ENCODE measurements at regions of chr17 and their contacts with region 1.

Region 1: DNA sequence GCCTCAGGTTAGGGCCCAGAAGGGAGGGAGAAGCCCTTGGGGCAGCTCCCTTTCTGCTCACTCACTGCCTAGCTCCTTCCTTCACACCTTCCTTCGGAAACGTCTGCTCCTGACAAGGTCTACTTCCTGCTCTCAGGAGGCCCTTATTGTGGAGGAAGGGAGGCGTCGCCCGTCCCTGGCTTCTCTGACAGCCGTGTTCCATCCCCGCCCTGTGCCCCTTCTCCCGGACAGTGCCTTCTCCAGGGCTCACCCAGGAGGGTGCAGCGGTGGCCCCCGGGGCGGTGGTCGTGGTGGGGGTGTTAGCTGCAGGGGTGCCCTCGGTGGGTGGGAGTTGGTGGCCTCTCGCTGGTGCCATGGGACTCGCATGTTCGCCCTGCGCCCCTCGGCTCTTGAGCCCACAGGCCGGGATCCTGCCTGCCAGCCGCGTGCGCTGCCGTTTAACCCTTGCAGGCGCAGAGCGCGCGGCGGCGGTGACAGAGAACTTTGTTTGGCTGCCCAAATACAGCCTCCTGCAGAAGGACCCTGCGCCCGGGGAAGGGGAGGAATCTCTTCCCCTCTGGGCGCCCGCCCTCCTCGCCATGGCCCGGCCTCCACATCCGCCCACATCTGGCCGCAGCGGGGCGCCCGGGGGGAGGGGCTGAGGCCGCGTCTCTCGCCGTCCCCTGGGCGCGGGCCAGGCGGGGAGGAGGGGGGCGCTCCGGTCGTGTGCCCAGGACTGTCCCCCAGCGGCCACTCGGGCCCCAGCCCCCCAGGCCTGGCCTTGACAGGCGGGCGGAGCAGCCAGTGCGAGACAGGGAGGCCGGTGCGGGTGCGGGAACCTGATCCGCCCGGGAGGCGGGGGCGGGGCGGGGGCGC is 231.9 kb downstream of the SEC14L1 start:
- DNase-seq: peak; percentile 44 to 82 (median 63)
- ATAC-seq: peak; percentile 60
- H3K4me3 ChIP-seq: peak overlapping the region; percentile 98
- H3K4me3 Mint-ChIP-seq: peak overlapping the region; percentile 80 to 100 (median 85)
- H3K27ac ChIP-seq: peak overlapping the region; percentile 80
- H3K27ac Mint-ChIP-seq: peak overlapping the region in 8 of 9 donors; percentile 84 to 93 (median 90)
- H3K4me1 ChIP-seq: peaks cover 44 to 54% of the 10 kb centered on the region in 2 donors
- H3K4me1 Mint-ChIP-seq: peaks cover 49 to 74% (median 65%) of the 10 kb centered on the region in 7 donors
- H3K27me3 ChIP-seq: no peaks in the 10 kb centered on the region
- H3K27me3 Mint-ChIP-seq: no peaks in the 10 kb centered on the region

Region 2: DNA sequence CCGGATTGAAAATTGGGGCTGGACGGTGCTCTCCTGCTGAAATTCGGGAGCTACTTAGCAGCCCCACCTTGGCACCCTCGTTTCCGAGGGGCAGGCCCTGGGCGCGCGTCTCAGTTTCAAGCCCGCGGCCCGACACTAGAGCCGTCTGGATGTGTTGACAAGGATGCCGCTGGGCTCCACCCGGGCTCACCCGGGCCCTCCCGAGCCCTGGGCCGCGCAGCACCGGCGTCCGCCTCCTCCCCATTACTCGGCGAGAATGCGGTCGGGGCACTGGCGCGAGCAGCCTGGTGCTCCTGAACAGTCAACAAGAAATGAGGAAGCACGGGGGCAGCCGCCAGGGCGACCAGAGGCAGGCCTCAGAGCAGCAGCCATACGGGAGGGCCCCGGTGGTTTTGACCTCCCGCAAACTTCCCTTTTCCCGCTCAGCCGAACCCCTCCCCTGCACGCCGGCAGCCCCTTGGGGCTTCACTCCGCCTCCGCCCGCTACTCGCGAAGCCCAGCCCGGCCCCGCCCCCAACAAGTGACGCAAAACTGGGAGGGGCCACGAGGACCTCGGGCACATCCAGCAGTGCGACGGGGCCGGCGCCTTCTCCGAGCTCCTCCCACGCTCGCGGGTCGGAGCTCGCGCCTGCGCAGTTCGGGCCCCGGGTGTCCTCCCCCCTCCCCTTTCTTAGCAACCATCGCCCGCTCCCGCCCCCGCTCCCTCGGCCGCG is 232.3 kb before region 1 on chr17:
- CTCF ChIA-PET with region 1: no interaction called
- POLR2A ChIA-PET with region 1: no interaction called
- intact Hi-C with region 1: loop called in 1 of 2 experiments (anchors 2 kb)
- DNase-seq: peak; percentile 98 to 100 (median 99)
- ATAC-seq: peak; percentile 96
- H3K4me3 ChIP-seq: peak overlapping the region; percentile 74
- H3K4me3 Mint-ChIP-seq: peak overlapping the region; percentile 65 to 87 (median 80)
- H3K27ac ChIP-seq: peak overlapping the region; percentile 88
- H3K27ac Mint-ChIP-seq: peak overlapping the region; percentile 75 to 93 (median 90)
- H3K4me1 ChIP-seq: peaks cover 14 to 28% of the 10 kb centered on the region in 2 donors
- H3K4me1 Mint-ChIP-seq: peaks cover 32 to 73% (median 66%) of the 10 kb centered on the region in 7 donors
- H3K27me3 ChIP-seq: no peaks in the 10 kb centered on the region
- H3K27me3 Mint-ChIP-seq: no peaks in the 10 kb centered on the region

Region 3: DNA sequence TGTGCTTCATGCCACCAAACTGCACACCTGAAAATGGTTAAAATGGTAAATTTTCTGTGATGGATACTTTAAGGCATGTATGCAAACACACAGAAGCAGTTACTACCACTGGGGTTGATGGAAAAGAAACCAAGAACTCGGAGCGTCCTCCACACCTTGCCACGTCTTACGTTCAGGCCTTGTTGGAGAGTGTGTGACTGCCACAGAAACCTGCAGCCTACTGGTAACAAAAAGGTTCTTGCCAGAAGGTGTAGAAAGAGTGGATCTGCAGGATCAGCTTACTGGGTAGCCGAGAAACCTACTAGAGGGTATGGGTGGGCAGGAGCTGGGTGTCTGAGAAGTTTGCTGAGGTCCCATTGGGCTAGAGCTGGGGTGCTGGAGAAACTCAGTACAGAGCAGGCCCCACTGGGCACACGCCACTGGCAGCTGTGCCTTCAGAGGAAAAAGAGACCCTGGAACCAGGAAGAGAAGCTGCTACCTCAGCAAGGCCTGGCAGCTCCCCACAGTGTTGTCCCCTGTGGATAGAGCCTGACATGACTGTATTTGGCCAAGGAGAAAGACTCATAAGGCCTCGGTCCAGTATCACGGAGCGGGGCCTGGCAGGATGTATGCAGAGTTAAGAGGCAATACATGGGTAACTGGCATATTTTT is 27.3 kb before region 1 on chr17:
- CTCF ChIA-PET with region 1: interaction called, 3 read pairs
- POLR2A ChIA-PET with region 1: interaction called, 24 read pairs
- intact Hi-C with region 1: loop called in 1 of 2 experiments (anchors 1 kb)
- DNase-seq: peak in 1 of 9 donors; percentile 13
- ATAC-seq: no peak
- H3K4me3 ChIP-seq: no peak overlapping the region
- H3K4me3 Mint-ChIP-seq: no peak overlapping the region
- H3K27ac ChIP-seq: no peak overlapping the region
- H3K27ac Mint-ChIP-seq: peak overlapping the region in 6 of 9 donors; percentile 7 to 74 (median 42)
- H3K4me1 ChIP-seq: peaks cover 27 to 39% of the 10 kb centered on the region in 2 donors
- H3K4me1 Mint-ChIP-seq: peaks cover 37 to 57% (median 51%) of the 10 kb centered on the region in 7 donors
- H3K27me3 ChIP-seq: no peaks in the 10 kb centered on the region
- H3K27me3 Mint-ChIP-seq: no peaks in the 10 kb centered on the region

Region 4: GRCh38 chr17:77391668-77392375 is 19.2 kb after region 1 on chr17:
- CTCF ChIA-PET with region 1: interaction called, 10 read pairs
- POLR2A ChIA-PET with region 1: interaction called, 112 read pairs
- intact Hi-C with region 1: loop called (anchors 1 kb)
- DNase-seq: peak in 4 of 9 donors; percentile 42 to 59 (median 48)
- ATAC-seq: no peak
- H3K4me3 ChIP-seq: peak overlapping the region; percentile 14
- H3K4me3 Mint-ChIP-seq: peak overlapping the region; percentile 61 to 87 (median 74)
- H3K27ac ChIP-seq: peak overlapping the region; percentile 50
- H3K27ac Mint-ChIP-seq: peak overlapping the region; percentile 65 to 95 (median 89)
- H3K4me1 ChIP-seq: peaks cover 68 to 79% of the 10 kb centered on the region in 2 donors
- H3K4me1 Mint-ChIP-seq: peaks cover 64 to 91% (median 82%) of the 10 kb centered on the region in 7 donors
- H3K27me3 ChIP-seq: no peaks in the 10 kb centered on the region
- H3K27me3 Mint-ChIP-seq: no peaks in the 10 kb centered on the region

Region 5: GRCh38 chr17:77429919-77430752 is 57.5 kb after region 1 on chr17:
- CTCF ChIA-PET with region 1: interaction called, 4 read pairs
- POLR2A ChIA-PET with region 1: interaction called, 22 read pairs
- intact Hi-C with region 1: no loop called
- DNase-seq: peak; percentile 67 to 87 (median 78)
- ATAC-seq: peak; percentile 64
- H3K4me3 ChIP-seq: no peak overlapping the region
- H3K4me3 Mint-ChIP-seq: peak overlapping the region; percentile 17 to 98 (median 51)
- H3K27ac ChIP-seq: peak overlapping the region; percentile 64
- H3K27ac Mint-ChIP-seq: peak overlapping the region; percentile 80 to 100 (median 95)
- H3K4me1 ChIP-seq: peaks cover 68 to 98% of the 10 kb centered on the region in 2 donors
- H3K4me1 Mint-ChIP-seq: peaks cover 51 to 96% (median 82%) of the 10 kb centered on the region in 7 donors
- H3K27me3 ChIP-seq: no peaks in the 10 kb centered on the region
- H3K27me3 Mint-ChIP-seq: no peaks in the 10 kb centered on the region

Region 6: DNA sequence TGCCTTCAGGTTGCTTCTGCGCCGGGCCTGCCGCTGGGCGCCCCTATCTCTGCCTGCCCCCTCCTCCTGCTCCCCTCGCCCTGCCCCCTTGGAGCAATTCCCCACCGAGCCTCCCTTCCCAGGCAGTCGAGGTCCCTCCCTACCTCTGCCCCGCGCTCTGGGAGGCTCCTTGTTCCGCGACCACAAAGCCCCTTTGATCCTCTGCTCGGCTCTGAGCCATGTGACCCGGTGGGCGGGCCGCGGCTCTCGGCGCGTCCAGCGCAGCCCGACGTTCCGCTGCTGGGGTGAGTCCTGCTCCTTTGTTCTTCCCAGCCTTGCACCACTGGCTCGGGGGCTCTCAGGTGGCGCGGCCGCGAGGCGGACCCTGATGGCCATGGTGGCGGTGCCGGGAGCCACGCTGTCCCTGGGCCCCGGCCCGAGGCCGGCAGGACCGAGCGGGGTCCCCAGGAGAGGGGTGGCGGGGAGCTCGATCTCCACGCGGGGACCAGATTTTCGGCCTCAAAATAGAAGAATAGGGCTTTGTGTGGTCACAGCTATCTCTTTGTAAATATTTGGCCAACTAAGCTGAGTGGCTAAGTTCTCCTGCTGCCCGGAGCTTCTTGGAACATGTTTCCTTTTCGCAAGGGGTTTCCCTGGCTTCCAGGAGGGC is 78.7 kb after region 1 on chr17:
- CTCF ChIA-PET with region 1: interaction called, 3 read pairs
- POLR2A ChIA-PET with region 1: interaction called, 64 read pairs
- intact Hi-C with region 1: loop called in 1 of 2 experiments (anchors 5 kb)
- DNase-seq: peak in 8 of 9 donors; percentile 64 to 82 (median 74)
- ATAC-seq: peak; percentile 75
- H3K4me3 ChIP-seq: peak overlapping the region; percentile 77
- H3K4me3 Mint-ChIP-seq: peak overlapping the region; percentile 92 to 100 (median 98)
- H3K27ac ChIP-seq: peak overlapping the region; percentile 92
- H3K27ac Mint-ChIP-seq: peak overlapping the region; percentile 93 to 100 (median 98)
- H3K4me1 ChIP-seq: peaks cover 31 to 40% of the 10 kb centered on the region in 2 donors
- H3K4me1 Mint-ChIP-seq: peaks cover 31 to 73% (median 37%) of the 10 kb centered on the region in 7 donors
- H3K27me3 ChIP-seq: no peaks in the 10 kb centered on the region
- H3K27me3 Mint-ChIP-seq: no peaks in the 10 kb centered on the region

Measured in naive thymus-derived CD4-positive, alpha-beta T cell (primary cell).